H1 (cell line): ENCODE measurements at regions of chr10 and their contacts with region 1.

Region 1: GRCh38 chr10:103564776-103565520 is 71.4 kb downstream of the NEURL1 start:
- DNase-seq: peak in 1 of 2 experiments; percentile 95
- H3K4me3 ChIP-seq: no peak overlapping the region
- H3K27ac ChIP-seq: no peak overlapping the region
- H3K4me1 ChIP-seq: no peaks in the 10 kb centered on the region; a peak in 1 of 7 replicates
- H3K27me3 ChIP-seq: no peaks in the 10 kb centered on the region
- CTCF ChIP-seq: peak; percentile 77 to 98 (median 94)
- EP300 ChIP-seq: no peak
- POLR2A ChIP-seq: no peak
- RAD21 ChIP-seq: peak; percentile 76 to 85

Region 2: GRCh38 chr10:103168486-103169311 is 396.2 kb before region 1 on chr10:
- CTCF ChIA-PET with region 1: no interaction called
- POLR2A ChIA-PET with region 1: no interaction called
- DNase-seq: no peak
- H3K4me3 ChIP-seq: no peak overlapping the region
- H3K27ac ChIP-seq: no peak overlapping the region
- H3K4me1 ChIP-seq: no peaks in the 10 kb centered on the region
- H3K27me3 ChIP-seq: no peaks in the 10 kb centered on the region
- CTCF ChIP-seq: no peak
- EP300 ChIP-seq: no peak
- POLR2A ChIP-seq: no peak
- RAD21 ChIP-seq: no peak

Region 3: GRCh38 chr10:103458720-103459119 is 106.2 kb before region 1 on chr10 and contains the start of gene CALHM1:
- CTCF ChIA-PET with region 1: interaction called, 17 read pairs
- POLR2A ChIA-PET with region 1: no interaction called
- DNase-seq: no peak
- H3K4me3 ChIP-seq: no peak within 1 kb of the TSS
- H3K27ac ChIP-seq: no peak within 1 kb of the TSS
- H3K4me1 ChIP-seq: peaks cover 0 to 8% (median 7%) of the 10 kb centered on the region in 4 experiments; a peak in 4 of 7 replicates
- H3K27me3 ChIP-seq: no peaks in the 10 kb centered on the region
- CTCF ChIP-seq: no peak
- EP300 ChIP-seq: no peak
- POLR2A ChIP-seq: no peak
- RAD21 ChIP-seq: no peak
- total RNA-seq, gene CALHM1: 0.34 TPM in 1 of 2 replicates, not detected in the other

Region 4: DNA sequence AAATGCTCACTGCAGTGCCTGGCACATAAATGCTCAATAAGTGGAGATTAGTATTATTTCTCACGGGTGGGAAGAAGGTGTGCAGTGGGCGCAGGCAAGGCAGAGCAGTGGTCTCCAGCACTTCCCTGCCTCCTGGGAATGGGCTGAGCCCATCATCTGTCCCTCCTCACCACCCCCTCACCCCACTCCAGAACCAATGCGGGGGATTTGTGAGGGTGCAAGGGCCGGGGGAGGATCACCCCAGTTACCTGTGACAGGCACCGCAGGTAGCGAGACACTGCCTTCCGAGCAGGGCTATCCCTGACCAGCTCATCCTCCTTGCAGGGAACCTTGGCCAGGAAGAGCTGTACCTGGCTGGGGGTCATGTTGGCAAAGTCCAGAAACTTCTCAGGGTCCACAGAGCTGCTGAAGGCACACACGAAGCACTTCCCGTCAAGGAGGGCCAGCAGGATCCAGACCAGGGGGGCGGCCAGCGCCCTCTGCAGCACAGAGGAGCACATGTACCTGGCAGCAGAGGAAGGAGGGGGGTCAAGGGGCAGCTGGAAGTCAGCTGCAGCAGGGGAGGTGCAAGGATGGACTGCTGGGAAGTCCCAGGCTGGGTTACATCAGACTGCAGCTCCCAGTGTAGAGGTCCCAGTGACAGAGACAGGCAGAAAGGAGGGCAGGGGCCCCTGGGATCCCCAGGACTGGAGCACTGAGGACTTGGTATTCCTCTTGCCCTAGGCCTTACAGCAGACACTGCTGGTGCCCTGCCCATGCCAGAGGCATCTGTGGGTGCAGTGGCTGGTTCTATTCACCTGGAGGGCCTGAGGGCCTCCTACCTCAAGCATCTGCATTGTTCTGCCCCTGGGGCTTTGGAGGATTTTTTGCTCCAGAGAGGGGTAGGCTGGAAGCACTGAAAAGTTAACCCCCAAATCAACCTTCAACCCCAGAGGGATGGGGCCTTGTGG is 88.6 kb before region 1 on chr10:
- CTCF ChIA-PET with region 1: interaction called, 34 read pairs
- POLR2A ChIA-PET with region 1: no interaction called
- DNase-seq: peak in 1 of 2 experiments; percentile 63
- H3K4me3 ChIP-seq: no peak overlapping the region
- H3K27ac ChIP-seq: no peak overlapping the region
- H3K4me1 ChIP-seq: peaks cover 0 to 16% (median 9%) of the 10 kb centered on the region in 4 experiments; a peak in 6 of 7 replicates
- H3K27me3 ChIP-seq: no peaks in the 10 kb centered on the region; a peak in 2 of 7 replicates
- CTCF ChIP-seq: peak; percentile 79 to 95 (median 88)
- EP300 ChIP-seq: no peak
- POLR2A ChIP-seq: no peak
- RAD21 ChIP-seq: peak; percentile 65 to 72

Region 5: GRCh38 chr10:103497161-103497915 is 67.6 kb before region 1 on chr10:
- CTCF ChIA-PET with region 1: interaction called, 37 read pairs
- POLR2A ChIA-PET with region 1: no interaction called
- DNase-seq: no peak
- H3K4me3 ChIP-seq: no peak overlapping the region
- H3K27ac ChIP-seq: no peak overlapping the region
- H3K4me1 ChIP-seq: peaks cover 0 to 4% (median 3%) of the 10 kb centered on the region in 4 experiments; a peak in 5 of 7 replicates
- H3K27me3 ChIP-seq: peaks cover 8 to 33% (median 26%) of the 10 kb centered on the region in 4 experiments
- CTCF ChIP-seq: no peak
- EP300 ChIP-seq: no peak
- POLR2A ChIP-seq: no peak
- RAD21 ChIP-seq: no peak

Region 6: GRCh38 chr10:103542764-103543616 is 22.0 kb before region 1 on chr10:
- CTCF ChIA-PET with region 1: interaction called, 64 read pairs
- POLR2A ChIA-PET with region 1: interaction called, 3 read pairs
- DNase-seq: no peak
- H3K4me3 ChIP-seq: peak overlapping the region in 2 of 4 experiments; percentile 10 to 44; a peak in 4 of 8 replicates
- H3K27ac ChIP-seq: no peak overlapping the region
- H3K4me1 ChIP-seq: peaks cover 3 to 7% (median 4%) of the 10 kb centered on the region in 4 experiments; a peak in 5 of 7 replicates
- H3K27me3 ChIP-seq: no peaks in the 10 kb centered on the region; a peak in 1 of 7 replicates
- CTCF ChIP-seq: peak; percentile 13 to 55 (median 49)
- EP300 ChIP-seq: peak in 1 of 2 experiments; percentile 3; a peak in 1 of 3 replicates
- POLR2A ChIP-seq: no peak
- RAD21 ChIP-seq: peak in 1 of 2 experiments; percentile 38; a peak in 2 of 4 replicates

Region 7: DNA sequence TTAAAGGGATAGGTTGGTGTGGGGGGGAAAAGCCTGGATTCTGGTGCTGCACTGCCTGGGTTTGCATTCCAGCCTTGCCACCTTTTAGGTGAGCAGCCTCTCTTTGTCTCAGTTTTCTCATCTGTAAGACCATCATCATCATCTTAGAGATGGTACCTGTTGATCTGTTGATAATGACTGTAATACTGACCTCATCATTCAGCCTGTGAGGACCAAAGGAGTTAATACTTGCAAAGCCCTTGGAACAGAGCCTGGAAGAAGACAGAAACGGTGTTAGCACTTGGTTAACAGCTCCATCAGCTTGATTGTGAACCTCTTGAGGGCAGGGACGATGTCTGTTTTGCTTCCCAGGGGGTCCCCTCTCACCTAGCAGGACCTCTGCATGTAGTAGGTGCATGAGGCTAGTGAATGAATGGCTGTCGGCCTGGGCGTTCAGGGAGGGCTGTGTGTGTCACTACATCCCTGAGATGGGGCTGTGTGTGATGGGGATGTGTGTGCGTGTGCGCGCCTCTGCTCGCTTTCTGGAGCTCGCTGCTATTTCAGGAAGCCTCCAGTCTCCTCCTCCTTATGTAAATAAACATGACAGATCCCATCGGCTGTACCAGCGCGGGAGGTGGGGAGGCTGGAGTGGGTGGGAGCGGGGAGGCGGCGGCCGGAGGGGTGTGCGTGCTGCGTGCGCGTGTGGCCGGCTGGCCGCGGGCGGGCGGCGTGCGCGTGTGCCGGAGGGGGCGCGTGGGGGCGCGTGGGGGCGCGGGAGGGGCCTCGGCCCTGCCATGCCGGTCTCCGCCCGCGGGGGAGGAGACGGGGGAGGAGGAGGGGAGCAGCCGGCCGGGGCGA is 10.2 kb before region 1 on chr10:
- CTCF ChIA-PET with region 1: interaction called, 64 read pairs
- POLR2A ChIA-PET with region 1: interaction called, 3 read pairs
- DNase-seq: peak in 1 of 2 experiments; percentile 64
- H3K4me3 ChIP-seq: peak overlapping the region; percentile 35 to 63 (median 39)
- H3K27ac ChIP-seq: no peak overlapping the region
- H3K4me1 ChIP-seq: peaks cover 0 to 6% (median 0%) of the 10 kb centered on the region in 4 experiments; a peak in 3 of 7 replicates
- H3K27me3 ChIP-seq: peaks cover 0 to 13% (median 10%) of the 10 kb centered on the region in 4 experiments; a peak in 5 of 7 replicates
- CTCF ChIP-seq: no peak
- EP300 ChIP-seq: no peak
- POLR2A ChIP-seq: no peak
- RAD21 ChIP-seq: no peak

Region 8: GRCh38 chr10:103592186-103593021 is 27.5 kb after region 1 on chr10:
- CTCF ChIA-PET with region 1: interaction called, 57 read pairs
- POLR2A ChIA-PET with region 1: no interaction called
- DNase-seq: peak; percentile 46 to 87
- H3K4me3 ChIP-seq: no peak overlapping the region
- H3K27ac ChIP-seq: no peak overlapping the region
- H3K4me1 ChIP-seq: peaks cover 0 to 2% (median 0%) of the 10 kb centered on the region in 4 experiments; a peak in 1 of 7 replicates
- H3K27me3 ChIP-seq: no peaks in the 10 kb centered on the region; a peak in 2 of 7 replicates
- CTCF ChIP-seq: peak; percentile 84 to 93 (median 88)
- EP300 ChIP-seq: no peak
- POLR2A ChIP-seq: no peak
- RAD21 ChIP-seq: peak; percentile 78 to 88